ENCODE measurements at regions of chr17 and their contacts with region 1.

Region 1: DNA sequence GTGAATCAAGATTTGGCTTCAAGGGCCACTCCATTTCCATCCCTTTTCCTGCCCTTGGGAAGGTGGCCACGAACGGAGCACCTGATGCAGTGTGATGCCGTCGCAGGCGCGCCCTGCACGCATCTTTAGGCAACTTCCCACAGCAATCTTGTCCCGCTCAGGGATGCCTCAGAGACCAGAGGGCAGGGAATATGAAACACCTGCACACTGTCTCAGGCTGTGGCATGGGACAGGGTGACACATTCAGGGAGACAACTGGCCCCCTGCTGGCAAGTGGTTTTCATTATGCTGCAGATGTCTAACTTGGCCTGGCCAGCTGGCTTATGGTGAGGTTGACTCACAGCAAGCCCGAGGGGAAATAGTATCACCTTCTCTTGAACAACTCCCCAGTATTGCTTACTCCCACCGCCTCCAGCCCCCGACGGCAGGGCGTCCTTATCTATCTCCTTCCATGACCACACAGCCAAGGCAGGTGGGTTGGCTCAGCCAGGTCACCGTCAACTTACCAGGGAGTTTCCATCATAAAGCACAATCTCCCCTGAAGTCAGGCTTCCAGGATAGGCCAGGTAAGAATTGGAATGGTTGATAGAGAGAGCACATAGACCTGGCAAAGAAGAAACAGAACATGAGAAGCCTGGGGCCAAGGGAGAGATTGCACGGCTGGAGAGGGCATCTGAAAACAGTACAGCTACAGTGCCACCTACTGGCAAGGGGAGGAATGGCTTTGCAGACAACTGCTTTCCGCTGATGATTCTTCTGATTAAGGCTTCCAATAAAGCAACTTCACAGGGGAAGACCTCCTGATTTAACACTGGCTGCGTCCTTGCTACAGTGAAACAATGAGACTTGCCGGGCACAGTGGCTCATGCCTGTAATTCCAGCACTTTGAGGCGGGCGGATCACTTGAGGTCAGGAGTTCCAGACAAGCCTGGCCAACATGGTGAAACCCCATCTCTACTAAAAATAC is 21.1 kb downstream of the WIPI1 start:
- DNase-seq: peak; percentile 92
- ATAC-seq: peak; percentile 72
- H3K4me3 Mint-ChIP-seq: peak overlapping the region; percentile 22
- H3K27ac Mint-ChIP-seq: peak overlapping the region; percentile 91
- H3K4me1 Mint-ChIP-seq: peaks cover 56% of the 10 kb centered on the region
- H3K27me3 Mint-ChIP-seq: no peaks in the 10 kb centered on the region

Region 2: GRCh38 chr17:68172461-68172954 is 263.7 kb before region 1 on chr17:
- CTCF ChIA-PET with region 1: interaction called, 22 read pairs
- POLR2A ChIA-PET with region 1: interaction called, 3 read pairs
- DNase-seq: peak; percentile 83
- ATAC-seq: peak; percentile 52
- H3K4me3 Mint-ChIP-seq: no peak overlapping the region
- H3K27ac Mint-ChIP-seq: no peak overlapping the region
- H3K4me1 Mint-ChIP-seq: peaks cover 42% of the 10 kb centered on the region
- H3K27me3 Mint-ChIP-seq: no peaks in the 10 kb centered on the region

Region 3: GRCh38 chr17:68247445-68248198 is 188.5 kb before region 1 on chr17 and contains the start of gene AMZ2:
- CTCF ChIA-PET with region 1: interaction called, 25 read pairs
- POLR2A ChIA-PET with region 1: interaction called, 6 read pairs
- DNase-seq: peak; percentile 96
- ATAC-seq: peak; percentile 89
- H3K4me3 Mint-ChIP-seq: peak within 1 kb of the TSS; percentile 81
- H3K27ac Mint-ChIP-seq: peak within 1 kb of the TSS; percentile 97
- H3K4me1 Mint-ChIP-seq: peaks cover 37% of the 10 kb centered on the region
- H3K27me3 Mint-ChIP-seq: no peaks in the 10 kb centered on the region
- total RNA-seq, gene AMZ2: 79.9 to 80.0 TPM

Region 4: DNA sequence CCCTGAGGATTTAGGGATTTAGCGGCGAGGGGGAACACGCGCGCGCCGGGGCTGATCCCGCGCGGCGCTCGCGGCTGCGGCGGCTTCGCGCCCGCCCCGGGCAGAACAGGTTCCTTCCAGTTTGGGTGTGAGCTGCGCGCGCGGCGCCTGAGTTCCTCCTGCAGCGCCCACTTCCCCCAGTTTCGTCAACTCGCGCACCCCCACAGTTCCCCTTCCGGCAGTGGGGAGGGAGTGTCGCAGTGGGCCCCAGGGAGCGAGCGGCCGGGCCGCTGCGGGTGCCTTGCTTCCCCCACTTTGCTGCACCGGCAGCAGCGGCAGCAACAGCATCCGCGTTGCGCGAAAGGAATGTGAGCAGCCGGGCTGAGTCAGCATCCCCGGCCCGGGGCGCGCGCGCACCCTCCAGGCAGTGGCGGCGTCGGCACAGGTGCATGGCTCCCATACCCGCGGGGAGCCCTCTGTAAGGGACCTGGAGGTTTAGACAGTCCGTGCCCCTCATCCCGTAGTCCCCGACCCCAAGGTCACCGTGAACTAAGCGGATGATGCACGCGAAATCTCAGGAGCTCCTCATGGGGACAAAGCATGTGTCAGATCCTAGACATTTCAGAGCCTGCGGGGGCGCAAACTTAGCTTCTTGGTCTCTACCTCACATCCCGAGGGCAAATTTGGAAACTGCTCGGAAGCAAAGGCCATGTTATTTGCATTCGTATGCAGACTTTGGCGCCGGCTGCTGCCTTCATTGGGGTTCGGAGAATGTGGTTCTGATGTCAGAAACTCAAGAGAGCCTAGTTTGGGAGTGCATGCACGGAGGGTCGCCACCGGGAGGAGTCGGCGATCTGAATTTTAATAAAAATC is 144.1 kb before region 1 on chr17:
- CTCF ChIA-PET with region 1: interaction called, 32 read pairs
- POLR2A ChIA-PET with region 1: interaction called, 14 read pairs
- DNase-seq: peak; percentile 97
- ATAC-seq: peak; percentile 81
- H3K4me3 Mint-ChIP-seq: peak overlapping the region; percentile 85
- H3K27ac Mint-ChIP-seq: peak overlapping the region; percentile 97
- H3K4me1 Mint-ChIP-seq: peaks cover 73% of the 10 kb centered on the region
- H3K27me3 Mint-ChIP-seq: no peaks in the 10 kb centered on the region

Region 5: DNA sequence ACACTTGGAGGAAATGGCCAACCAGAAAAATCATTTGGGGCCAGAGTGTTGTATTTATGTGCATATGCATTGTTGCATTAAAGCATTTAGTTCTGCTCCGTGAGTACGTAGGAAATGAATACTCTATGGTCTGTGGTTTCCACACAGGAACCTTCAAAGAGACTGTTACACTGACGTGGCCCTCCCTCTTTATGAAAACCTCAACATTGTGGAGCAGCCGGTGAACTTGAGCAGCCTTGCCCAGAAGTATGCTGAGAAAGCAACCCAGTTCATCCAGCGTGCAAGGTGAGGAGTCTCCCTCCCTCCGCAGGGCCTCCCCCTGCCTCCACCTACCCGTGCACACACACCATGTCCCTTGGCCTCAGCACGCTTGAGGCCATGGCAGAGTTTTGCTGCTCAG is 79.6 kb before region 1 on chr17:
- CTCF ChIA-PET with region 1: interaction called, 10 read pairs
- POLR2A ChIA-PET with region 1: no interaction called
- DNase-seq: peak; percentile 88
- ATAC-seq: peak; percentile 94
- H3K4me3 Mint-ChIP-seq: peak overlapping the region; percentile 60
- H3K27ac Mint-ChIP-seq: peak overlapping the region; percentile 86
- H3K4me1 Mint-ChIP-seq: peaks cover 75% of the 10 kb centered on the region
- H3K27me3 Mint-ChIP-seq: no peaks in the 10 kb centered on the region

Region 6: DNA sequence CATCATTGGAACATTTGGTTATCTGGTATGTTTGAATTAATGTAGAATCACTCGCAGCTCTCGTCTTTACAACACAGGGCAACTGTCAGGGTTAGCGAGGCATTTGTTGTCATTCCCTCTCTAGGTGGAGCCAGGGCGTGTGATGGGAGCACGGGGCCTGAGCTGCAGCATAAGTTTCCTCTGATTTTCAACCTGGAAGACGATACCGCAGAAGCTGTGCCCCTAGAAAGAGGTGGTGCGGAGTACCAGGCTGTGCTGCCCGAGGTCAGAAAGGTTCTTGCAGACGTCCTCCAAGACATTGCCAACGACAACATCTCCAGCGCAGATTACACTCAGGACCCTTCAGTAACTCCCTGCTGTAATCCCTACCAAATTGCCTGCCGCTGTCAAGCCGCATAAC is 16.1 kb before region 1 on chr17:
- CTCF ChIA-PET with region 1: interaction called, 10 read pairs
- POLR2A ChIA-PET with region 1: no interaction called
- DNase-seq: no peak
- ATAC-seq: no peak
- H3K4me3 Mint-ChIP-seq: no peak overlapping the region
- H3K27ac Mint-ChIP-seq: no peak overlapping the region
- H3K4me1 Mint-ChIP-seq: peaks cover 12% of the 10 kb centered on the region
- H3K27me3 Mint-ChIP-seq: no peaks in the 10 kb centered on the region

Region 7: DNA sequence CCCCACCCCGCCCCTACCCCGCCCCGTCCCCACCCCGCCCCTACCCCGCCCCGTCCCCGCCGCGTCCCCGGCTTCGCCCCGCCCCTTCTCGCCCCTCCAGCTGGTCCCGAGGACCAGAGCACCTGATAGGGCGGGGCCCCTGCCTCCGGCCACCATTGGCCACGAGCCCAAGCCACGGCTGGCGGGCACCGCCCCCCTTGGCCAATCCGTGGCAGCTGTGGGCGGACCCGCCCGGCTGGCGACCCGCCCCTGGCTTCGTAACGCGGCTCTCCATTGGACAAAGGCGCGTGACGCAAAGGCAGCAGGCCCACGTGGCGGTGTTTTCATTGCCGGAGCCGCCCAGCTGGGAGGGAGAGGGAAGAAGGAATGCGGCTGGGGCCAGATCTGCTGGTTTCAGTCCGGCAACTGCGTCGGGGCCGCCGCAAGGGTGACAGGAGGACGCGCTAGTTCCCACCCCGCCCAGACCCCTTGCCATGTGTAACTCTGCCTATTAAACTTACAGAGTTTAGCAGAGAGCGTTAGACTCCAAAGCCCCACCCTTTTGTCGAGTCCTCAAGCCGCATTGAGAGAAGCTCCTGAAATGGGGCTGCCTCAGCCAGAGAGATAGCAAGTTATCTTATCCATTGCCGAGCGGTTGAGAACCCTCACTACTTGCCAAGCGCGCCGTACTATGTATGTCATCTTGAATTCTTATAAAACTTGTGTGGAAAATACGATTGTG is 21.5 kb after region 1 on chr17:
- CTCF ChIA-PET with region 1: interaction called, 270 read pairs
- POLR2A ChIA-PET with region 1: interaction called, 23 read pairs
- DNase-seq: peak; percentile 98
- ATAC-seq: peak; percentile 95
- H3K4me3 Mint-ChIP-seq: peak overlapping the region; percentile 77
- H3K27ac Mint-ChIP-seq: peak overlapping the region; percentile 88
- H3K4me1 Mint-ChIP-seq: peaks cover 82% of the 10 kb centered on the region
- H3K27me3 Mint-ChIP-seq: no peaks in the 10 kb centered on the region

Region 8: GRCh38 chr17:68542698-68543463 is 106.7 kb after region 1 on chr17:
- CTCF ChIA-PET with region 1: no interaction called
- POLR2A ChIA-PET with region 1: no interaction called
- DNase-seq: no peak
- ATAC-seq: no peak
- H3K4me3 Mint-ChIP-seq: no peak overlapping the region
- H3K27ac Mint-ChIP-seq: no peak overlapping the region
- H3K4me1 Mint-ChIP-seq: no peaks in the 10 kb centered on the region
- H3K27me3 Mint-ChIP-seq: no peaks in the 10 kb centered on the region

Region 9: DNA sequence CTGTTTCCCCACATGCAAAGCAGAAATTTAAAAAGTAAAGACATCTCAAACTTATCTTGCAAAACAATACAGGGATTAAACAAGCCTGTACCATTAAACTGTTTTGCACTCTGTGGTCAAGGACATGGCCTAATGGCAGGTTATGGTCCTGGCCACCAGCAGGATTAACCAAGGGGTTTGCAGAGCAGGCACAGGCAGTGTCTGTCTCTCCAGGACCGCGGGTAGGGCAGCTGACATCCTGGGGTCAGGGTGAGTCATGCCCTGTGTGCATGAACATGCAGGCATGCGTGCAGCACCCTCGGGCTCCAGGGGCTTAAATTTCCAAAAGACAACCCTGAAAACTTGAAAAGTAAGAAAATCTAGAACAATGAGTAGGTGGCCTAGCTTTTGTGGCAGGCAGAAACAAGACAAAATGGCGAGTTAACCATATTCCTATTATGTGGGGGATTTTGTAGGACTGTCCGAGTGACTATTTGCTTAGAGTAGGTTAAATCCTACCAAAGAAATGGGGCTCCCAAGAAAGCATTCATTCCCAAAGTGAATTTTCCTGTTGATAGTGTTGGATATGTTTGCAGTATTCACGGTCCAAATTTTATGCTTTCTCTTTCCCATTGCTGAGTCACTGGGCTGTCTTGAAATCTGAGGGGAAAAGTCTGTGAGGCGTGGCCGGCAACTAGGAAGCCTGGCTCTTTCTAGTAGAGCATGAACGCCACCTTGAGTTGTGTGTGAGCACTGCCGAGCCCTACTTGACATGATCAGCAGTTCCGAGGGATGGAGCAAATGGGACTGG is 323.4 kb after region 1 on chr17:
- CTCF ChIA-PET with region 1: no interaction called
- POLR2A ChIA-PET with region 1: no interaction called
- DNase-seq: peak; percentile 77
- ATAC-seq: peak; percentile 92
- H3K4me3 Mint-ChIP-seq: peak overlapping the region; percentile 56
- H3K27ac Mint-ChIP-seq: peak overlapping the region; percentile 43
- H3K4me1 Mint-ChIP-seq: peaks cover 23% of the 10 kb centered on the region
- H3K27me3 Mint-ChIP-seq: peaks cover 4% of the 10 kb centered on the region

Measured in activated CD8-positive, alpha-beta T cell treated with anti-CD3 and anti-CD28 coated beads, Interleukin-2, amount 10 ng/mL, durations not matched to agents 7 days and 5 days (primary cell).